Posterior cingulate gyrus (tissue), 11 donors: ENCODE measurements at regions of chr5 and their contacts with region 1.

Region 1: GRCh38 chr5:31232273-31232888 is 38.9 kb downstream of the CDH6 start:
- DNase-seq: peak in 1 of 10 donors; percentile 19

Region 2: GRCh38 chr5:30040488-30041118 is 1191.8 kb before region 1 on chr5:
- intact Hi-C with region 1: loop called (anchors 5 kb)
- DNase-seq: peak in 6 of 10 donors; percentile 42 to 88 (median 53)

Region 3: GRCh38 chr5:30401479-30402058 is 830.8 kb before region 1 on chr5:
- intact Hi-C with region 1: loop called (anchors 5 kb)
- DNase-seq: peak in 6 of 10 donors; percentile 16 to 55 (median 22)

Region 4: DNA sequence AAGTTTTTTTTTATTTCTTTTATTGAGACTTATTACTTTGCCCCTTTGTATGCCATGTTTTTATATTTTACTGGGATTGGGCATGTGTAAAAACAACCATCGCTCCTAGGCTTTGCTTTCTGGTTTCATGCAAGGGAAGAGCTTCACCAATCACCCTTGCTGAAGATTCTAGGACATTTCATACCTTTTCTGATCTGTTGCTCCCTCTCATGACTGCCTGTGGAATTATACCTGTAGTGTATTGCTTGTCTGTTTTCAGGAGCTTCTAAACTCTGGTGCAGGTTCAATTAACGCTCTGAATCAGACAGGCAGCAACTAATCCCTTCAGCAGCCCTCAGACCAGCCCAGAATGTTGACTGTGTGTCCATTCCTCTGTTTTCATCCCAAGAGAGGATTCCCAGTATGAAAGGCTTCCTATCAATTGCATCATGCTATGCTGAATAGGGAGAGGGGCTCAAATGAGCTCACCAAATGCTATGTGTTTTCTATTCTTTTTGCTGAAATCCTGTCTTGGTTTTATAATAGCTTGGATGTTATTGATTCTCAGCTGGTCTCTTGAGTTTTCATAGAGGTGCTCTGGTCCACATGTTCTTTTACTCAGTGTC is 611.8 kb before region 1 on chr5:
- intact Hi-C with region 1: no loop called
- DNase-seq: no peak

Region 5: GRCh38 chr5:30804739-30805505 is 427.5 kb before region 1 on chr5:
- intact Hi-C with region 1: loop called (anchors 5 kb)
- DNase-seq: peak in 1 of 10 donors; percentile 52

Region 6: GRCh38 chr5:31531888-31532710 is 299.7 kb after region 1 on chr5 and contains the starts of genes C5orf22 and DROSHA:
- intact Hi-C with region 1: no loop called
- DNase-seq: peak; percentile 93 to 99 (median 96)

Region 7: DNA sequence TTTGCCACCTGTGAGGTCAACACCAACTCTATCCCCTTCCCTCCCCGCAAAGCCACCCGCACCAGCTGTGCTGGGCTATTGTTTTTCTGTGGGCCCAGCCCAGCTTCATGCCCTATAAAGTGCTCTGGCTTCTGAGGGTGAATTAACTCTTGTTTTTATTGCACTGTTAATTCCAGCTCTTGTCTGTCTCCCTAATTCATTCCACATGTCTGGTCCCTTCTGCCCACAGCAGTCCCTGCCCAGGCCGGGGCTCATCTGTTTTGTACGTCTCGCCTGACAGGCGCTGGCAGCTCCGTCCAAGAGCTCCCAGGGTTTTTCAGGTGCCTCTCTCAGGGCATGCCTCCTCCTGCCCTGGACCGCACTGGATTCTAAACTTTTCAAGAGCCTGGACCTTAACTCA is 525.4 kb after region 1 on chr5:
- intact Hi-C with region 1: no loop called
- DNase-seq: no peak

Region 8: DNA sequence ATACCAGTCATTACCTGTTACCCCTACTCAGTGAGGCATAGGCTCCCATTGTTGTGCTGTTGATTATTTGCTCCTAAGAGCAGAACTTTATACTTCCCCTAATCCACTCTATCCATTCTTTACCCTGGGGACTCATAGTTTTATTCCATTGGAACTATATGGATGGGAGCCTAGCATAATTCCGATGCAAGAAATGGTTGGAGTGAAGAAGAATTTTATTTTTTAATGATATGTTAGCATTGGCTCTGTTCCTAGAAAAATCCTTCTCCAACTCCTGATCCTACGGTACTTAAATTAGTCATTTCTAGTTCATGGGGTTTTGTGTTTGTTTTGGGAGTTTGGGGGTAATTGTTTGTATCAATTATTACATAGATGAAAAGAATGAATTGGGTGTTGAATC is 750.2 kb after region 1 on chr5:
- intact Hi-C with region 1: no loop called
- DNase-seq: no peak